ENCODE measurements at regions of chr2 and their contacts with region 1.

Region 1: GRCh38 chr2:167342769-167343168 is 454.5 kb downstream of the XIRP2 start:
- DNase-seq: peak; percentile 23
- ATAC-seq: no peak; the same call in 1 of the 2 replicates
- H3K4me3 ChIP-seq: no peak overlapping the region
- H3K27ac ChIP-seq: no peak overlapping the region
- H3K4me1 ChIP-seq: no peaks in the 10 kb centered on the region
- H3K27me3 ChIP-seq: no peaks in the 10 kb centered on the region
- CTCF ChIP-seq: peak; percentile 52

Region 2: GRCh38 chr2:167177196-167177595 is 165.6 kb before region 1 on chr2:
- CTCF ChIA-PET with region 1: no interaction called
- POLR2A ChIA-PET with region 1: no interaction called
- intact Hi-C with region 1: no loop called
- DNase-seq: no peak
- ATAC-seq: no peak
- H3K4me3 ChIP-seq: no peak overlapping the region
- H3K27ac ChIP-seq: no peak overlapping the region
- H3K4me1 ChIP-seq: peaks cover 17% of the 10 kb centered on the region
- H3K27me3 ChIP-seq: no peaks in the 10 kb centered on the region
- CTCF ChIP-seq: no peak

Region 3: DNA sequence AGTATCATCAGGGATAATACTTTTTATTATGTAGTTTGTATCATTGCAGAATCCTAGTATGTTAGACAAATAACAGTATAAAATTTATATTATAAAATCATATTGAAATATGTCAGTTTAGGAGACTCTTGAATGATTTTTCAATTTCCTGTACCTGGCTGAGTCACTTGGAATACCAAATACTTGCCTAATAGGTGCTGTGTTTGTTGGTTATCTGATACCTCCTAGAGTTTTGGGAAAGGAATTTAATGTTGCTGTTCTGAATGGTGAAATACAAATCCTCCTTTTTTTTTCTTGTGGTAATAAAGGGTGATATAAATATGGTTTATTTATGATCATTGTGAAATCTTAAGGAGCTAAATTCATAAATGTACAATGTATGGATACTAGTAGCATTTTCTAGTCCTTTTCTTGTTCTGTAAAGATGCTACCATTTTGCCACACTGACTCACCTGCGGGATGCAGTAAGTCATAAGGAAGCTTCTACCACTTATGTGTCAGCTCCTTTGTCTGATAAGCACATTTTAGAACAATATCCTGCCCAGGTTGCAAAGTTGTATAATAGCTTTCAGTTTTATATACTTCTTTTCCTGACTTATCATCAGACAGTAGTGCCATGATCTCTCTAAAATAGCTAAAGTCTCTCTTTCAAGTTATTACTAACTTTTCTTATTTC is 11.0 kb after region 1 on chr2:
- CTCF ChIA-PET with region 1: no interaction called
- POLR2A ChIA-PET with region 1: interaction called, 15 read pairs
- intact Hi-C with region 1: no loop called
- DNase-seq: peak; percentile 55
- ATAC-seq: peak; percentile 59
- H3K4me3 ChIP-seq: no peak overlapping the region
- H3K27ac ChIP-seq: no peak overlapping the region
- H3K4me1 ChIP-seq: peaks cover 10% of the 10 kb centered on the region
- H3K27me3 ChIP-seq: no peaks in the 10 kb centered on the region
- CTCF ChIP-seq: no peak

Region 4: GRCh38 chr2:167954495-167954894 is 611.7 kb after region 1 on chr2:
- CTCF ChIA-PET with region 1: no interaction called
- POLR2A ChIA-PET with region 1: no interaction called
- intact Hi-C with region 1: loop called (anchors 10 kb)
- DNase-seq: peak; percentile 18
- ATAC-seq: peak; percentile 64; the same call in 1 of the 2 replicates
- H3K4me3 ChIP-seq: no peak overlapping the region
- H3K27ac ChIP-seq: no peak overlapping the region
- H3K4me1 ChIP-seq: peaks cover 12% of the 10 kb centered on the region
- H3K27me3 ChIP-seq: no peaks in the 10 kb centered on the region
- CTCF ChIP-seq: no peak

Measured in PC-3 (cell line).